ENCODE measurements at regions of chr19 and their contacts with region 1.

Region 1: GRCh38 chr19:19531951-19532805 is 3.5 kb downstream of the YJEFN3 start:
- DNase-seq: peak; percentile 86
- ATAC-seq: peak; percentile 85
- H3K4me3 Mint-ChIP-seq: no peak overlapping the region
- H3K27ac Mint-ChIP-seq: no peak overlapping the region
- H3K4me1 Mint-ChIP-seq: peaks cover 13% of the 10 kb centered on the region
- H3K27me3 Mint-ChIP-seq: no peaks in the 10 kb centered on the region
- CTCF ChIP-seq: peak; percentile 54

Region 2: GRCh38 chr19:19554074-19555023 is 22.2 kb after region 1 on chr19:
- CTCF ChIA-PET with region 1: interaction called, 9 read pairs
- POLR2A ChIA-PET with region 1: no interaction called
- intact Hi-C with region 1: loop called (anchors 2 kb)
- DNase-seq: peak; percentile 43
- ATAC-seq: peak; percentile 48
- H3K4me3 Mint-ChIP-seq: no peak overlapping the region
- H3K27ac Mint-ChIP-seq: no peak overlapping the region
- H3K4me1 Mint-ChIP-seq: no peaks in the 10 kb centered on the region
- H3K27me3 Mint-ChIP-seq: peaks cover 1% of the 10 kb centered on the region
- CTCF ChIP-seq: no peak

Region 3: DNA sequence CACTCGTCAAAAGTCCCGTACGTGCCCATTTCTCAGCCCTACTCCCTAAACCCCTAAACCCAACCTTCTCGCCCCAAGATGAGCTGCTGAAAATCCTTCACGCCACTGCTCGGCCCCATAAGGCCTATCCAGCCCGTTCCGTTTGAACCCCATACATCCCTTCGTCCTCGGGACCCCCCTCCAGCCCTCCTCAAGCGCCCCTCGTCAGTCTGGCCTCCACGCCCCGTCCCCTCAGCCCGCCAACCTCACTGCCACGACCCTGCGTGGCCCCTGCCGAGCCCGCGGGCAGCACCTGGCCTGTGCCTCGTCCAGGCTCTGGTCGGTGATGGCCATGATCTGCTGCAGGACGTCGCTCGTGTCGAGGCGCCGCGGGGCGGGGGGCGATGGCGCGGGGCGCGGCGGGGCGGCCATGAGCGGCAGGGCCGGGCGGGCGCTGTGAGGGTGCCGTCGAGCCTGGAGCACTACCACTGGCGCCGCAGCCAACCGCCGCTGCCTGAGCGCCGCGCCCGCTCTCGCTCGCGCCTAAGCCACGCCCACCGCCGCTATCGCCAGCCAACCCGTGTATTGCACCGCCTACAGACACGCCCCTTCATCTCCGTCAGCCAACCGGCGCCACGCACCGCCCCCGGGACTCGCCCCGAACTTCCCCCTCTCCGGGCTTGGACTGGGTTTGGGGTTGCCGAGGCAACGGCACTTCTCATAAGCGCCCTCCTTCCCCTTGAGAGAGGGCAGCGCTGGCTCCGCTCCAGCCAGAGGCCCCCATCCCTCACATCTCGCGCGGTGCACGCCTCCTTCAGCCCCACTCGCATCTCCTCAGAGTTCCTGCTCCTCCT is 86.3 kb after region 1 on chr19 and contains the start of gene PBX4:
- CTCF ChIA-PET with region 1: interaction called, 4 read pairs
- POLR2A ChIA-PET with region 1: no interaction called
- intact Hi-C with region 1: loop called (anchors 1 kb)
- DNase-seq: peak; percentile 98
- ATAC-seq: peak; percentile 95
- H3K4me3 Mint-ChIP-seq: peak within 1 kb of the TSS; percentile 85
- H3K27ac Mint-ChIP-seq: peak within 1 kb of the TSS; percentile 83
- H3K4me1 Mint-ChIP-seq: peaks cover 35% of the 10 kb centered on the region
- H3K27me3 Mint-ChIP-seq: no peaks in the 10 kb centered on the region
- CTCF ChIP-seq: no peak
- total RNA-seq, gene PBX4: 19.4 and 21.8 TPM in 2 replicates

Region 4: DNA sequence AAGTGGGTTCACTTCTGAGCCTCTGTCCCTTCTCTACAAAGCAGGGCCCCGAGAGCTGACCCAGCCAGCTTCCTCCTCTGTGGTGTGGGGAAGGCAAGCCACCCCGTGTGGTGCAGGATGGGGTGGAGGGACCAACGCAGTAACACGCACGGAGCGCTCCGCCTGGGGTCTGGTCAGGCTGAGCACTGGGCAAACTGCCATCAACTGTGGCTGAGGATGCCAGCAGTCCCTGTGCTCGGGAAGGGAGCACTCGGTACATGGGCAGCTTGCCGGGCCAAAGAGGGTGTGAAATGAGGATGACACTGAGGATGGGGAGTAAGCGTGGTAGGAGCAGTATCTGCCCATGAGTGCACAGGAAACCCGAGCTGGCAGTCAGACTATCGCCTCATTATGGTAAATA is 118.9 kb after region 1 on chr19:
- CTCF ChIA-PET with region 1: interaction called, 10 read pairs
- POLR2A ChIA-PET with region 1: no interaction called
- intact Hi-C with region 1: no loop called
- DNase-seq: no peak
- ATAC-seq: no peak
- H3K4me3 Mint-ChIP-seq: no peak overlapping the region
- H3K27ac Mint-ChIP-seq: no peak overlapping the region
- H3K4me1 Mint-ChIP-seq: no peaks in the 10 kb centered on the region
- H3K27me3 Mint-ChIP-seq: no peaks in the 10 kb centered on the region
- CTCF ChIP-seq: no peak

Region 5: GRCh38 chr19:19732579-19733501 is 200.7 kb after region 1 on chr19 and contains the start of gene ZNF14:
- CTCF ChIA-PET with region 1: no interaction called
- POLR2A ChIA-PET with region 1: no interaction called
- intact Hi-C with region 1: loop called (anchors 2 kb)
- DNase-seq: peak; percentile 79
- ATAC-seq: peak; percentile 99
- H3K4me3 Mint-ChIP-seq: peak within 1 kb of the TSS; percentile 99
- H3K27ac Mint-ChIP-seq: peak within 1 kb of the TSS; percentile 96
- H3K4me1 Mint-ChIP-seq: peaks cover 28% of the 10 kb centered on the region
- H3K27me3 Mint-ChIP-seq: no peaks in the 10 kb centered on the region
- CTCF ChIP-seq: no peak
- total RNA-seq, gene ZNF14: 11.8 and 13.4 TPM in 2 replicates

Region 6: GRCh38 chr19:19956434-19957075 is 424.4 kb after region 1 on chr19:
- CTCF ChIA-PET with region 1: interaction called, 19 read pairs
- POLR2A ChIA-PET with region 1: interaction called, 4 read pairs
- intact Hi-C with region 1: loop called (anchors 1 kb)
- DNase-seq: no peak
- ATAC-seq: no peak
- H3K4me3 Mint-ChIP-seq: no peak overlapping the region
- H3K27ac Mint-ChIP-seq: no peak overlapping the region
- H3K4me1 Mint-ChIP-seq: peaks cover 7% of the 10 kb centered on the region
- H3K27me3 Mint-ChIP-seq: no peaks in the 10 kb centered on the region
- CTCF ChIP-seq: no peak

Region 7: GRCh38 chr19:20278342-20278741 is 746.2 kb after region 1 on chr19:
- CTCF ChIA-PET with region 1: no interaction called
- POLR2A ChIA-PET with region 1: no interaction called
- intact Hi-C with region 1: loop called (anchors 2 kb)
- DNase-seq: no peak
- ATAC-seq: no peak
- H3K4me3 Mint-ChIP-seq: no peak overlapping the region
- H3K27ac Mint-ChIP-seq: no peak overlapping the region
- H3K4me1 Mint-ChIP-seq: peaks cover 29% of the 10 kb centered on the region
- H3K27me3 Mint-ChIP-seq: no peaks in the 10 kb centered on the region
- CTCF ChIP-seq: no peak

Measured in activated B cell treated with CpG ODN at 0.5 μM for 24 hours (primary cell).